ENCODE measurements at regions of chr5 and their contacts with region 1.

Region 1: DNA sequence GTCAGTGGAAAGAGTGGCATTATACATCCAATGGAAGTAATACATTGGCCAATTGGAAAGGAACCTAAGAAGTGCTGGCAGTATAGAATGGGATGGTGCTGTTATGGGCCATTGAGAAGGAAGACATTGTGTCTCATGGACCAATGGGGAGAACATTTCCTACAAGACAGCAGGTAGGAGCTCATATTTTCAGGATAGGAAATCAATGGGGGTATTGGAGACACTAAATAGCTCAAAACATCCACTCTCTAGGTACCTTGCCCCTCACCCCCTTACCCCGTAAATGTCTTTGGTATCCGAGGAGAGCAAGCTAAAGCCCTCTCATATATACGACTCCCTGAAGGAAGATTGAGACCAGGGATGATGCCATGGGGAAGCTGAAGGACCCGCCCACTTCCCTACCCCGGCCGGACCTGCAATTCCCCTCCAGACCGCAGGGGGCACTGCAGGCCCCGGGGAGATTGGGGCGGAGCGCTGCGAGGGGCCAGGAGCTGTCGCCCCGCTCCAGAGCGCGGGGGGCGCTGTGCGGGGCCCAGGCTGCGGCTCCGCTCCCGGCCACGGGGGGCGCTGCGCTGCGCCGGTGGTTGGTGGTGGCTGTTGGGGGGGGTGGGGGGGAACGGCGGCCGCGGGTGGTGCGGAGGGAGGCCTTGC is at the start of gene KDM3B:
- DNase-seq: peak; percentile 99
- H3K4me3 Mint-ChIP-seq: peak within 1 kb of the TSS; percentile 95
- H3K27ac Mint-ChIP-seq: peak within 1 kb of the TSS; percentile 95
- H3K4me1 Mint-ChIP-seq: peaks cover 37% of the 10 kb centered on the region
- H3K27me3 Mint-ChIP-seq: no peaks in the 10 kb centered on the region
- total RNA-seq, gene KDM3B: 48.7 and 52.7 TPM in 2 replicates

Region 2: GRCh38 chr5:138213161-138214029 is 138.8 kb before region 1 on chr5 and contains the start of gene CDC23:
- intact Hi-C with region 1: loop called (anchors 1 kb)
- DNase-seq: peak; percentile 98
- H3K4me3 Mint-ChIP-seq: peak within 1 kb of the TSS; percentile 97
- H3K27ac Mint-ChIP-seq: peak within 1 kb of the TSS; percentile 96
- H3K4me1 Mint-ChIP-seq: peaks cover 14% of the 10 kb centered on the region
- H3K27me3 Mint-ChIP-seq: no peaks in the 10 kb centered on the region
- total RNA-seq, gene CDC23: 46.6 and 47.9 TPM in 2 replicates

Region 3: DNA sequence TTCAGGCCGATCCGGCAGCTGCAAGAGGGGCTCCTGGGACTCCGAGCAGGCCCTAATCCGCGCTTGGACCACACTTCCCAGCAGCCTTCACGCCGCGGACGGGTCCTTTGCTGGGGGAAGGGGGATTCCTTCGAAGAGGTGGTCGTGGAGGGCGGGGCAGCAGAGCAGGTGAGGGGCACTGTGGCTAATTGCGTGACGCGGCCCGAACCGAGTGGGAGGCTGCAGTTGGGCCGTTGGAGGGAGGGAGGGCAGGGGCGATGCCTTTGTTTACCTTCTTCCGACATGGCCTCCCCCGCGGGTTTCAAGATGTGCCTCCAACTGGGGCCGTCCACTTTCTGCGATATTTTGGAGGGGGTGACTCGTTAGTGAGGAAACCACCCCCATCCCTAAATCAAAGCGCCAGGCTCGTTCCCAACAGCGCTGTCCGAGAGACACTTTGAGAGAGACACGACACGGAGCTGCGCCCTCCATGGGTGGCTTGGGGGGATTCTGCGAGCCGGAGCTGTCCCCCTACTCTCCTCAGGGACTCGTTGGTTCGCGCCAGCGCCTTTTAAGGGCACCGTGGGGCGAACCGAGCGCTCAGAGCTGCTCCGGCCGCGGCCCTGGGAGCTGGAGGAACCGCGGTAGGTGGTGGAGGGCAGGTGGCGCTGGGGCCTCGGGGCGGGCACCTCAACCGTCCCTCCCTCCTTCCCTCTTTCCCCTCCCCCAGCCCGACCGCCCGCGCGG is 14.3 kb before region 1 on chr5 and contains the start of gene FAM53C:
- intact Hi-C with region 1: loop called (anchors 1 kb)
- DNase-seq: peak; percentile 98
- H3K4me3 Mint-ChIP-seq: peak within 1 kb of the TSS; percentile 80
- H3K27ac Mint-ChIP-seq: peak within 1 kb of the TSS; percentile 98
- H3K4me1 Mint-ChIP-seq: peaks cover 40% of the 10 kb centered on the region
- H3K27me3 Mint-ChIP-seq: no peaks in the 10 kb centered on the region
- total RNA-seq, gene FAM53C: 24.1 and 27.1 TPM in 2 replicates

Region 4: GRCh38 chr5:138369706-138370105 is 17.5 kb after region 1 on chr5:
- intact Hi-C with region 1: no loop called
- DNase-seq: no peak
- H3K4me3 Mint-ChIP-seq: no peak overlapping the region
- H3K27ac Mint-ChIP-seq: no peak overlapping the region
- H3K4me1 Mint-ChIP-seq: peaks cover 18% of the 10 kb centered on the region
- H3K27me3 Mint-ChIP-seq: no peaks in the 10 kb centered on the region

Region 5: DNA sequence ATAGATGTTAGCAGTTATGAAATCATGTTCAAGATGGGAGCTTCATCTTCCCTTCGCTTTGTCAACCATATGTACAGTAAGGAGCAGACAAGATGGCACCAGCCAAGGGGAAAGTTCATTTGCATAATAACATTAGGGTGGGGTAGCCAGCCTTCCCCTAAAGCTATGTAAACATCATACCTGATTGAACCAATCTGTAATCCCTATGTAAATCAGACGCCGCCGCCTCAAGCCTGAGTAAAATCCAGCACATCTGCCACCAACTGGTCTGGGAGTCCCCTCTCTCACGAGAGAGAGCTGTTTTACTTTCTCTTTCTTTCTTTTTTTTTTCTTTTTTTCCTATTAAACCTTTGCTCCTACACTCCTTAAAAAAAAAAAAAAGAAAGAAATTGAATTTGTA is 55.8 kb after region 1 on chr5:
- intact Hi-C with region 1: no loop called
- DNase-seq: peak; percentile 72
- H3K4me3 Mint-ChIP-seq: no peak overlapping the region
- H3K27ac Mint-ChIP-seq: no peak overlapping the region
- H3K4me1 Mint-ChIP-seq: peaks cover 6% of the 10 kb centered on the region
- H3K27me3 Mint-ChIP-seq: no peaks in the 10 kb centered on the region

Region 6: GRCh38 chr5:138464008-138464387 is 111.8 kb after region 1 on chr5:
- intact Hi-C with region 1: no loop called
- DNase-seq: peak; percentile 98
- H3K4me3 Mint-ChIP-seq: peak overlapping the region; percentile 90
- H3K27ac Mint-ChIP-seq: peak overlapping the region; percentile 93
- H3K4me1 Mint-ChIP-seq: peaks cover 47% of the 10 kb centered on the region
- H3K27me3 Mint-ChIP-seq: peaks cover 6% of the 10 kb centered on the region